PC-3 (cell line): ENCODE measurements at regions of chr5 and their contacts with region 1.

Region 1: GRCh38 chr5:160119142-160119904 is at the start of gene PWWP2A:
- DNase-seq: peak; percentile 100
- ATAC-seq: peak; percentile 93
- H3K4me3 ChIP-seq: peak within 1 kb of the TSS; percentile 99
- H3K27ac ChIP-seq: peak within 1 kb of the TSS; percentile 44
- H3K4me1 ChIP-seq: peaks cover 6% of the 10 kb centered on the region; the same call in 1 of the 2 replicates
- H3K27me3 ChIP-seq: no peaks in the 10 kb centered on the region
- CTCF ChIP-seq: no peak; the same call in 1 of the 2 replicates
- total RNA-seq, gene PWWP2A: 14.2 and 15.3 TPM in 2 replicates

Region 2: DNA sequence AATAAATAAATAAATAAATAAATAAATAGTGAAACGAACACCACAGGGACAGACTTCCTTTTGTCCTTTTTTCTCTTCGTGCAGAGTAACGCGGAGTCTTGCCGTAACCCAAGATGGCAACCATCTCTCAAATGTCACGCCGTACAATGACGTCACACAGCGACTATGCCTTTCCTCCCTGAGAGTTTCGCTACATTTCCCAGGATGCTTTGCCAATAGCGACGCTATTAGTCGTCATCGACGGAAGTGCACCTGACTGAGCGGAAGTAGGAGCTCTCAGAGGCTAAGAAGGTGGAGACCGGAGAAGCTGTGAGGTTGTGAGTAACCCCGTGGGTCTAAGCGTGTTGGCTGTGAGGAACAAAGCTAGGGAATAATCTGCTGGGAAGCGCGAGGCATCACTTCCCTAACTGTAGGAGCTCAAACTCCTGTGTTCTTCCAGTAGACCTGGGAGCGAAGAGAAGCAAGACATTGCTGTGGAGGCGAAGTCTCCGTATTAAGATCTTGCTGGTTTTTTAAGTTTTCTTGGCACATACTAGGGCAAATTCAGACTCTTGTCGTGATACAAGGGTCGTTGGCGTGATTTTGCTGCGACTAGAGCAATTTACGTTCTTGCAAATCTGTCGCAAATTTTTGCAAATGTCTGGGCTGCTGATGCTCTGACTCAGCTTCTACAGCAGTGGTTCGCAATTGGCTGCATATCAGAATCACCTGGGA is 110.3 kb before region 1 on chr5 and contains the start of gene TTC1:
- CTCF ChIA-PET with region 1: no interaction called
- POLR2A ChIA-PET with region 1: no interaction called
- intact Hi-C with region 1: loop called (anchors 1 kb)
- DNase-seq: peak; percentile 99
- ATAC-seq: peak; percentile 94
- H3K4me3 ChIP-seq: peak within 1 kb of the TSS; percentile 86
- H3K27ac ChIP-seq: peak within 1 kb of the TSS; percentile 44
- H3K4me1 ChIP-seq: peaks cover 19% of the 10 kb centered on the region
- H3K27me3 ChIP-seq: no peaks in the 10 kb centered on the region
- CTCF ChIP-seq: no peak
- total RNA-seq, gene TTC1: 61.4 and 65.0 TPM in 2 replicates

Region 3: DNA sequence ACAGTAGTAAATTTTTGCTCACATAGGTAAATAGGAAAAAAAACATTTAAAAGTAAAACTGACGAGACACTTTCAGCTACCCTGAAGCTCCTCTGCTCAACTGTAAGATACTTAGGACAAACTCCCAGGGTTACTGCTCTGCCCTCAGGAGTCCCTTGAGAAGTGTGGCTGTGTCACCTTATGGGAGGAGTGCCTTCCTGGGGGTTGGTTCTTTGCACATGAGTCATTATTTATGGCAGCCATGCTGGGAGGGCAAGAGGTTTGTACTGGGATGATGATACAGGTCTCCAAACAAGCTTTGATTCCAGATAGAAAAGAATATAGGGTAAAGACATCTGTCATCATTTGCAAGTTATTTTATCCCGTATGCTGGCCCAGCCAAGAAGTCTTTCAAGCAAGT is 64.5 kb before region 1 on chr5:
- CTCF ChIA-PET with region 1: interaction called, 3 read pairs
- POLR2A ChIA-PET with region 1: no interaction called
- intact Hi-C with region 1: loop called (anchors 2 kb)
- DNase-seq: peak; percentile 66
- ATAC-seq: peak; percentile 98
- H3K4me3 ChIP-seq: no peak overlapping the region
- H3K27ac ChIP-seq: 0 out of 2 replicates have a peak overlapping the region, but pooled peaks have one; percentile 22
- H3K4me1 ChIP-seq: peaks cover 17% of the 10 kb centered on the region
- H3K27me3 ChIP-seq: no peaks in the 10 kb centered on the region
- CTCF ChIP-seq: no peak

Region 4: DNA sequence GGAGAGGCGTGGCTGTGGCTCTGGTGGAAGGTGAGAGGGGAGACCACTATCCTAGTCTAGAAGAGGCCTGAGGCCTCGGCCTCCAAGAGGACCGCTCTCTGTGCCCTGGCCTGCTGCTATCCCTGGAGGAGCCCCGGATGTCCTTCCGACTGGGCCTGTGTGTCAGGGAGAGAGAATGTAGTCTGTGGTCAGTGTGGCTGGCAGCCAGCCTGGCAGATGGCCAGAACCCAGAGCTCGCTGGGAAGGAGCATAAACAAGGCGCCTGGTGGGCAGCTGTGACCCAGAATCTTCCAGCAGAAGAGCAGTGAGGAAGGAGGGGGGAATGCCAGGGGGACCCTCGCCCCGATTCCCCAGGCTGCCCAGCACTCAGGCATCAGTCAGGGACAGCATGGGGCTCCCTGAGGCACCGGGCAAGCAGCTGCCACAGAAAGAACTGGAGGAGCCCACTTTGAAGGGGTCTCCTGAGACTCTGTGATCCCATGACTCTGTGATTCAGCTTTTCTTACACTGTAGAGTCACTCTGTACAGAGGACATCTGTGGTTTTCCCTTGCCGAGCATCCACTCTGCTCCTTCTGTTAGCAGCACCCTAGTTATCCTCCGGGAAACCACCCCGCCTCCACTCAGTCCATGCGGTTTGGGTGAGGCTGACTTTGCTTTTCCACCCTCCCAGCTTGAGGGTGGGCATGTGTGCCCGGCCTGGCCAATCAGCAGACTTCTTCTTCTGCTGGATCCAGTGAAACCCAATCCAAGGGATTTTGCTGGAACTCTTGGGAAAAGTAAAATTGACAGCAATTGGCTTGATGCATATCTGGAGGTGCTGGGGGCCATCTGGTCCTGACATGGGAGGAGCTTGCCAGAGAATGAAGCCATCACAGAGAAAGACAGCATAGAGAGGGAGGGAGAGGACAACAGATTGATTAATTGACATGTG is 46.1 kb after region 1 on chr5:
- CTCF ChIA-PET with region 1: no interaction called
- POLR2A ChIA-PET with region 1: no interaction called
- intact Hi-C with region 1: loop called (anchors 1 kb)
- DNase-seq: peak; percentile 98
- ATAC-seq: peak; percentile 92
- H3K4me3 ChIP-seq: peak overlapping the region; percentile 51
- H3K27ac ChIP-seq: peak overlapping the region; percentile 90
- H3K4me1 ChIP-seq: peaks cover 36% of the 10 kb centered on the region
- H3K27me3 ChIP-seq: no peaks in the 10 kb centered on the region
- CTCF ChIP-seq: no peak

Region 5: GRCh38 chr5:160567031-160567705 is 447.8 kb after region 1 on chr5:
- CTCF ChIA-PET with region 1: no interaction called
- POLR2A ChIA-PET with region 1: no interaction called
- intact Hi-C with region 1: no loop called
- DNase-seq: no peak
- ATAC-seq: no peak
- H3K4me3 ChIP-seq: no peak overlapping the region
- H3K27ac ChIP-seq: no peak overlapping the region
- H3K4me1 ChIP-seq: no peaks in the 10 kb centered on the region
- H3K27me3 ChIP-seq: no peaks in the 10 kb centered on the region
- CTCF ChIP-seq: no peak